PC-9 (cell line): ENCODE measurements at regions of chr17 and their contacts with region 1.

Region 1: GRCh38 chr17:32921017-32921416 is 6.9 kb upstream of the TMEM98 start:
- DNase-seq: no peak
- H3K4me3 ChIP-seq: no peak overlapping the region
- H3K27ac ChIP-seq: no peak overlapping the region
- H3K4me1 ChIP-seq: no peaks in the 10 kb centered on the region
- H3K27me3 ChIP-seq: peaks cover 6% of the 10 kb centered on the region; the same call in 1 of the 2 replicates
- CTCF ChIP-seq: no peak

Region 2: DNA sequence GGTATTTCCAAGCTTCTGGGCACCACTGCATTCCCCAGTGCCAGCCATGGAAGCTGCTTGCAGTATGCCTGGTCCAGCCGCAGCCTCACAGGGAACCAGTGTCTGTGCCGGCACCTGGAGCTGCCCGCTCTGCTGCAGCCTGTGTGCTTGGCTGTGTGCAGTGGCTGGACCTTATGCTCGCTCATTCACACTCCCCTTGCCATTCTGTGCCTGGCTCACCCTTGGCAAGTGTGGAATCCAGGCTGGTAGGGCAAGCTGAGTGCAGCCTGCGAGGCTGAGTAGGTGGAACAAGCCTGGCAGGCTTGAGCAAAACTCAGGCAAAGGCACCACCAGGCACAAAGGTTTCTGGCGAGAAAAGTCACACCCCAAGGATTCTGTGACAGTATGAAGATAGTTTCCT is 188.1 kb before region 1 on chr17:
- CTCF ChIA-PET with region 1: no interaction called
- POLR2A ChIA-PET with region 1: interaction called, 28 read pairs
- intact Hi-C with region 1: no loop called
- DNase-seq: no peak
- H3K4me3 ChIP-seq: no peak overlapping the region
- H3K27ac ChIP-seq: no peak overlapping the region
- H3K4me1 ChIP-seq: no peaks in the 10 kb centered on the region
- H3K27me3 ChIP-seq: no peaks in the 10 kb centered on the region
- CTCF ChIP-seq: no peak